AG04449 (cell line): ENCODE measurements at regions of chr3 and their contacts with region 1.

Region 1: DNA sequence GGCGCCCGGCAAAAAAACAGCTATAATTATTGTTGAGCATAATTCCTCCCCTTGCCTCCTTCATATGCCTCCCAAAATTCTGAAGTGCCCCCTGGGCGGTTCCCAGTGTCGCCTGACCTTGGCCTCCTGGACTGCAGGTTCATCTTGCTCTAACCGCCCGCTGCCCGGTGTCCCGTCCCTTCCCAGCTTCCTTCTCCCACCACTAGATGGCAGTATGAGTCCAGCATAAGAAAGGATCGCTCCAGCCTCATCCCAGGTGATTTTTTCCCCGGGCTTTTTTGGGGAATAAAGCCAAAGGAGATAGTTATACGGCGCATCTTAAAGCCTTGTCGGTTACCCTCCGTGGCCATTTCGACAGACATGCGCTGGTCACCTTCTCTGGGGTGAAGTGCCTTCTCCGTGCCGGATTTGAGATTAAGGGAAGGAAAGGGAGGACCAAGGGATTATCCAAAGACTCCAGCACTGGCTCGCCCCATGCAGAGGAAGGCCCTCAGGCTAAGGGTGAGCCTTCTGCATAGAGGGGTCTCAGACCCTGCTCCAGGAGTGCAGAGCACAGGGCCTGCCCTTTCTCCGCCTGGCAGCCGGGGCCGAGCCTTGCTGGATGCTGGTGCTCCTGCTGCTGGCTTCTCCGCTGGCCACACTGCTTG is 45.8 kb upstream of the TRA2B start:
- DNase-seq: no peak
- H3K4me3 ChIP-seq: no peak overlapping the region; the same call in 1 of the 2 replicates
- CTCF ChIP-seq: peak; percentile 79

Region 2: DNA sequence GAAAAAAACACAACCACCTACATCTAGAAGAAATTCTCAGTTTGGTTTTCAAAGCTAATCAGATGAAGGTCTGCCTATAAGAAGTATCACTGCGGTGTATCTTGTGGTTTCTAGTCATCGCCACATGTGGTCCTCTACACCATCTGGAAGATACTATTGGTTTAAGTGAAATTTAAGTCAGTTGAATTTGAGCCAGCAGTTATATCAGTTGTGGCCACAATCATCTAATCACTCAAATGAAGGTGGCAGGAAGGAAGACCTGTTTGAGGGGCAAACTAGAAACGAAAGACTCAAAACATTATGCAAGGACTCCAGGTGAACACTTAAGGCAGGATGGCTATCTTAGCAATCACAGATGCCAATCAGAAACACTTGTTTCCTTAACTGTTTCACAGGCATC is 76.6 kb after region 1 on chr3:
- CTCF ChIA-PET with region 1: no interaction called
- POLR2A ChIA-PET with region 1: no interaction called
- DNase-seq: no peak
- H3K4me3 ChIP-seq: no peak overlapping the region
- CTCF ChIP-seq: no peak

Region 3: GRCh38 chr3:186241910-186242821 is 258.5 kb after region 1 on chr3:
- CTCF ChIA-PET with region 1: interaction called, 12 read pairs
- POLR2A ChIA-PET with region 1: no interaction called
- DNase-seq: no peak
- H3K4me3 ChIP-seq: no peak overlapping the region
- CTCF ChIP-seq: peak; percentile 26

Region 4: GRCh38 chr3:186259612-186260383 is 276.2 kb after region 1 on chr3:
- CTCF ChIA-PET with region 1: interaction called, 24 read pairs
- POLR2A ChIA-PET with region 1: no interaction called
- DNase-seq: peak; percentile 36
- H3K4me3 ChIP-seq: no peak overlapping the region
- CTCF ChIP-seq: peak; percentile 86

Region 5: DNA sequence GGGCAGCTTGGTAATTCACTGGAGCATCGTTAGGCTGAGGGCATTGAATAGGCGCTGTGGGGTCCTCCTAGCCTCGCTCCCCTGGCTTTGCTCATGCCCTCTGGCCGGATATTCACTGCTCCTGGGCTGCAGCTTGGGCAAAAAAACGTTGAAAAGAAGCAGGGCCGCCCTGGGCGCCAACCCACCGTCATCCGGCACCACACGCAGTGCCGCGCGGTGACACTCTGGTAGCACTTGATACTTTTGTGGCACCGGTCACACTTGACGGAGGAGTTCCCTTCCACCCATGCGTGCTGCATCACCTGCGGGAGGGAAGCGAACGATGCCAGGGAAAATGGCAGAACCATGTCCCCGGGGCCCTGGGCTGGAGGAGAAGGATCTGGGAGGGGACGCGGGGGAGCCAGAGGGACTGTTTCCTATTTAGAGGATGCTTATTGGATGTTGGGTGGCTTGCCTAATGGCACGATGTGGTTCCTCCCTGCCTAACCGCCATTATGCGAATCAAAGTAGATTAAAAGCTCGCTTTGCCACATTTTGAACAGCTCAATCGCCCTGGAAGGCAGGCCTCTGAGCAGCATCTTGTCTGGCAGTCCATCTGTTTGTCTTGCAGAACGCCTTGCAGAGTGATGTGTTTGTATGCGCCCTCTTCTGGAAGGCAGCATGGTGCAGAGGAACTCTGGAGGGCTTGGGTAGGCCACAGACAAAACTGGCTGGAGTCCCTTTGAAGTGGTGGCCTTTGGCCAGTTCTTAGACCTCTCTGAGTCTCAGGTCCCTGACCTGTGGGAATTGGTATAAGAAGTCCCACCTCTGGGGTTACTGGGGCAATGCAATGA is 285.2 kb after region 1 on chr3:
- CTCF ChIA-PET with region 1: interaction called, 31 read pairs
- POLR2A ChIA-PET with region 1: no interaction called
- DNase-seq: no peak
- H3K4me3 ChIP-seq: no peak overlapping the region
- CTCF ChIP-seq: peak; percentile 50

Region 6: DNA sequence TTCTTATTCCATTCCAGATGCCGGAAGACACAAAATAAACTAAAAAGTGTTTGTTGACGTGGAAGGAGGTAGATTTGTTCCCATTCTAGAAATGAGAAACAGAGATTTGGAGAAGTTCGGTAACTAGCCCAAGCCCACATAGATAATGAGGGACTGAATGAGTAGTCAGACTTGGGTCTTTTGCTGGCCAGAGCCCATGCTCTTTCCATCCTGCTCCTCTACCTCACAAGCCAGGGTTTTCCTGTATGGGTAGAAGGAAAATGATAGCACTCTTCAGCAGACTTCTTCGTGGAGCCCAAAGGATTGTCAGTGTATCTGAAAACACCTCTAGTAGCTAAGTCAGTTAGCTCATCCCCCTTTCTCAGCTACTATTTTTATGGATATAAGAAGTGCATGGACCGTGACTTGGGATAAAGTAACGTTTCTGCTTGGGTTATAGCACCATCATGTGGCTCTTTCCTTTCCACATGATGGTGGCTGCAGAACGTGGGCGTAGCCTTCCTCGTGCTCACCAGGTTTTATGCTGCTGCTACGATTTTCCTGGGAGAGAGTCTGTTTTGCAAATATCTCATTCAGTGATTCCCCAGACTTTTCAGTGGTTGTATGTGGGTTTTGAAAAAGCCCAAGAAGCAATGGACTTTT is 293.8 kb after region 1 on chr3:
- CTCF ChIA-PET with region 1: interaction called, 210 read pairs
- POLR2A ChIA-PET with region 1: no interaction called
- DNase-seq: no peak
- H3K4me3 ChIP-seq: no peak overlapping the region
- CTCF ChIP-seq: peak; percentile 58